Astrocyte of the cerebellum (primary cell): ENCODE measurements at regions of chrX and their contacts with region 1.

Region 1: DNA sequence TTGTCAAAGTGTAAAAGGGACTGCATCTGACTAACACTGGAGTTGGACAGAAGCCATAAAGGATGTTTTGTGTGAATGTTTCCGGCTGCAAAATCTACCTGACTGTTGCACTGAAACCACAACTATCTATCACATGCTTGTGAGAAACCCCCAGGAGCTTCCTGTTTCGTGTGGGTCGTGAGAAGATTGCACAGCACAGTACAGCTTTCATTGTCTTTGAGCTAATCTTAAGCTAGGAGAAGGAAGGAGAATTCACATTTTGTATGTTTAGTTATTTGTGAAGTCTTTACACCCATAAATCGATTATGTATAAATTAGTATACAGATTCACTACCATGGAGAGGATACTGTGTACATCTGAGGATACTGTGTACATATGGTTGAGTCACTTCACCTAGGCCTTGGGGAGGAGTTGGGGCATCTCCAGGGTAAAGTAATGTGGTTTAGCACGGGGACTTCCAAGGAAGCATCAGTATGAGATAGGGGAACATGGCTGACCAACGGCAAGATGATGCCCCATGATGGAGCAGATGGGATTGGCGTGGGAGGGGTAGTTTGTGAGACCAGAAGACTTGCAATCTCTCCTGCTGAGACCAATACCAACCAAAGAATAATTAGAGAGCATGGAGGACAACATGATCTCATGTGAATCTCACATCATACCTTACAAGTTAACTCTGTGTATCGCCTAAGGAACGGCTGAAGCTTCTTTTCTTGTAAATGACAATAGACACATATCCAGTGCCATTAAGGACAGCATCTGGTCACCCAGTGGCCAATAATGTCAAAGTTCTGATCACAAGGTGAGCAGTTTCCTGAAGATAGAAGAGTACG is 43.1 kb upstream of the FAM9C start:
- DNase-seq: peak; percentile 33
- H3K4me3 ChIP-seq: no peak overlapping the region
- CTCF ChIP-seq: no peak

Region 2: GRCh38 chrX:12999422-12999821 is 88.1 kb before region 1 on chrX:
- in situ Hi-C with region 1: loop called (anchors 5 kb)
- DNase-seq: no peak
- H3K4me3 ChIP-seq: no peak overlapping the region
- CTCF ChIP-seq: no peak

Region 3: DNA sequence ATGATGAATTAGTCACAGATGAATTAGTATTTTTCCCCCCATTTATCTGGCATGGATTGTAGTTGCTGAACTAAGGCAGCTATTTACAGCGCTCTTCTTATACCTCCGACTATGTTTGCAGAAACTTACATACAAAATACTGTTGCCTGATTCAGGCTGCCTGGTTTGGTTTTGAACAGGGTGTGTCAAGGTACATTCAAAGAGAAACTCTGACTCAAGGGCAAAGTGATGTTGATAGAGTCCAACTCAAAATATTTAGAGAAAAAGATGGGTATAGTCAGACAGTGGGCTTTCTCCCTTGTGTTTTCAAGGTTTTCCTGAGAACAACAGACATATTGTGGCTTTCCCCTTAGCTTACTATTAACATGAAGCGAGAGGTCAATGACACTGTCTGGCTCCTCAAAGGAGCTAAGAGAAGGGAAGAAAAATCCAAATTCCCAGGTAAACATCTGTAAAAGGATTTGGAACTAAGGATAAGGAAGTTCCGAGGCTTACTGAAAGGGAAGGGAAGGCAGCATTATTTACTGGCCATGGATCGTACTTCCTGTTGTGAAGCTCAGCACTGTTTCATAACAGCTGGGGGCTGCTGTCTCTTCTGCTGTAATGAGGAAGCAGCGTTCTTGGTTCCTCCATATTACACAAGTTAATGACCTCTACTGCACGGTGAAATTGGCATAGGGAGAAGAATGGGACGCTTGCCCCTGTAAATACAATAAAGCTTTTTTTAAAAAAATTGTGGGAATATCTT is 74.0 kb before region 1 on chrX:
- in situ Hi-C with region 1: no loop called
- DNase-seq: no peak
- H3K4me3 ChIP-seq: no peak overlapping the region
- CTCF ChIP-seq: no peak

Region 4: GRCh38 chrX:13029341-13029740 is 58.2 kb before region 1 on chrX:
- in situ Hi-C with region 1: no loop called
- DNase-seq: peak; percentile 26
- H3K4me3 ChIP-seq: no peak overlapping the region
- CTCF ChIP-seq: no peak